ENCODE measurements at regions of chr18 and their contacts with region 1.

Region 1: GRCh38 chr18:2687390-2688001 is 32.0 kb downstream of the SMCHD1 start:
- DNase-seq: peak; percentile 26
- ATAC-seq: peak; percentile 63
- H3K4me3 ChIP-seq: peak overlapping the region; percentile 37
- H3K27ac ChIP-seq: peak overlapping the region; percentile 69
- H3K4me1 ChIP-seq: peaks cover 7% of the 10 kb centered on the region; the same call in 1 of the 2 replicates
- H3K27me3 ChIP-seq: no peaks in the 10 kb centered on the region
- CTCF ChIP-seq: no peak
- EP300 ChIP-seq: no peak
- POLR2A ChIP-seq: no peak
- RAD21 ChIP-seq: no peak

Region 2: GRCh38 chr18:2636126-2636631 is 51.3 kb before region 1 on chr18:
- CTCF ChIA-PET with region 1: no interaction called
- POLR2A ChIA-PET with region 1: no interaction called
- RAD21 ChIA-PET with region 1: no interaction called
- SMC1A ChIA-PET with region 1: interaction called, 6 read pairs
- in situ Hi-C with region 1: no loop called
- intact Hi-C with region 1: loop called (anchors 2 kb)
- DNase-seq: no peak
- ATAC-seq: peak; percentile 11
- H3K4me3 ChIP-seq: peak overlapping the region; percentile 57; the same call in 1 of the 2 replicates
- H3K27ac ChIP-seq: peak overlapping the region; percentile 99
- H3K4me1 ChIP-seq: peaks cover 40% of the 10 kb centered on the region
- H3K27me3 ChIP-seq: no peaks in the 10 kb centered on the region
- CTCF ChIP-seq: no peak
- EP300 ChIP-seq: no peak
- POLR2A ChIP-seq: no peak
- RAD21 ChIP-seq: no peak